IMR-90 (cell line): ENCODE measurements at regions of chr9 and their contacts with region 1.

Region 1: DNA sequence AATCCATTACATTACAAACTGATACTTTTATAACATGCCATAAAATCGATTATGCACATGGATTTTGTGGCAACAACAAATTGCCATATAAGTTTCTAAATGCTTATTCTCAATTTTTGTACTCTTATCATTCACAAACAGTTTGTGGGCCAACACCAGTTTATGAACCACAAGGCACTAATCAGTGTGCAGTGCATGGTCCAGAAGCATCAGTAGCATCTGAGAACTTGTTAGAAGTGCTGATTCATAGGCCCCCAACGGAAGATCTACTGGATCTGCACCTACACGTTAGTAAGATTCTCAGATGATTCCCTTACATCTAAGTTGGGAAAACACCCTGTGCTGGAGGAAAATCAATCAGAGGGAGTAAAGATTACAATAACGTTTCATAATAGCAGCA is 242.8 kb downstream of the TRPM3 start:
- DNase-seq: no peak
- ATAC-seq: no peak
- H3K4me3 ChIP-seq: no peak overlapping the region
- H3K27ac ChIP-seq: no peak overlapping the region
- H3K4me1 ChIP-seq: no peaks in the 10 kb centered on the region
- H3K27me3 ChIP-seq: no peaks in the 10 kb centered on the region; the same call in 1 of the 2 replicates
- CTCF ChIP-seq: no peak
- POLR2A ChIP-seq: no peak
- RAD21 ChIP-seq: no peak

Region 2: GRCh38 chr9:70840266-70840665 is 38.3 kb before region 1 on chr9:
- CTCF ChIA-PET with region 1: no interaction called
- POLR2A ChIA-PET with region 1: no interaction called
- dilution Hi-C with region 1: no loop called
- in situ Hi-C with region 1: no loop called
- intact Hi-C with region 1: loop called (anchors 5 kb)
- DNase-seq: no peak
- ATAC-seq: no peak
- H3K4me3 ChIP-seq: no peak overlapping the region
- H3K27ac ChIP-seq: no peak overlapping the region
- H3K4me1 ChIP-seq: no peaks in the 10 kb centered on the region
- H3K27me3 ChIP-seq: no peaks in the 10 kb centered on the region; the same call in 1 of the 2 replicates
- CTCF ChIP-seq: no peak
- POLR2A ChIP-seq: no peak
- RAD21 ChIP-seq: no peak

Region 3: DNA sequence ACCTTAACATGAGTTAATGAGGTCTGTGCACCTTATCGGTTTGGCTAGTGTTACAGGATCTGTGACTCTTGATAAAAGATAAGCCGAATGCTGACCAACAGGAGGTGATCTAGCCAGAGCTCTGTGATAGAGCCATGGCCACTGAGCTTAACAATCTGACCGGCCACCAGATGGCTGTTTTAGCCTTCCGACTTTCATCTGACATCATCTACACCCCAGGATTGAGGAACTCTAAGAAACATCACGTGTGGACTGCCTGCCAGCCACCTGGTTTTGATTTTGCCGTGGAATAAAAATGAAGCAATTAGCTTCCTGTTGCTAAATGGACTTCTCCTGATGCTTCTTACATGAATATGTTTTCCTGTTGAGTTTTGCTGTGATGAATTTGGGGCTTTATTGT is 608.5 kb after region 1 on chr9:
- CTCF ChIA-PET with region 1: no interaction called
- POLR2A ChIA-PET with region 1: no interaction called
- dilution Hi-C with region 1: no loop called
- in situ Hi-C with region 1: no loop called
- intact Hi-C with region 1: no loop called
- DNase-seq: no peak
- ATAC-seq: no peak
- H3K4me3 ChIP-seq: no peak overlapping the region
- H3K27ac ChIP-seq: no peak overlapping the region
- H3K4me1 ChIP-seq: no peaks in the 10 kb centered on the region
- H3K27me3 ChIP-seq: no peaks in the 10 kb centered on the region
- CTCF ChIP-seq: no peak
- POLR2A ChIP-seq: no peak
- RAD21 ChIP-seq: no peak